PC-9 (cell line): ENCODE measurements at regions of chr20 and their contacts with region 1.

Region 1: GRCh38 chr20:39810309-39810708 is 848.2 kb downstream of the DHX35 start:
- DNase-seq: no peak
- H3K4me3 ChIP-seq: no peak overlapping the region
- H3K27ac ChIP-seq: no peak overlapping the region
- H3K4me1 ChIP-seq: no peaks in the 10 kb centered on the region
- H3K27me3 ChIP-seq: no peaks in the 10 kb centered on the region
- CTCF ChIP-seq: no peak

Region 2: DNA sequence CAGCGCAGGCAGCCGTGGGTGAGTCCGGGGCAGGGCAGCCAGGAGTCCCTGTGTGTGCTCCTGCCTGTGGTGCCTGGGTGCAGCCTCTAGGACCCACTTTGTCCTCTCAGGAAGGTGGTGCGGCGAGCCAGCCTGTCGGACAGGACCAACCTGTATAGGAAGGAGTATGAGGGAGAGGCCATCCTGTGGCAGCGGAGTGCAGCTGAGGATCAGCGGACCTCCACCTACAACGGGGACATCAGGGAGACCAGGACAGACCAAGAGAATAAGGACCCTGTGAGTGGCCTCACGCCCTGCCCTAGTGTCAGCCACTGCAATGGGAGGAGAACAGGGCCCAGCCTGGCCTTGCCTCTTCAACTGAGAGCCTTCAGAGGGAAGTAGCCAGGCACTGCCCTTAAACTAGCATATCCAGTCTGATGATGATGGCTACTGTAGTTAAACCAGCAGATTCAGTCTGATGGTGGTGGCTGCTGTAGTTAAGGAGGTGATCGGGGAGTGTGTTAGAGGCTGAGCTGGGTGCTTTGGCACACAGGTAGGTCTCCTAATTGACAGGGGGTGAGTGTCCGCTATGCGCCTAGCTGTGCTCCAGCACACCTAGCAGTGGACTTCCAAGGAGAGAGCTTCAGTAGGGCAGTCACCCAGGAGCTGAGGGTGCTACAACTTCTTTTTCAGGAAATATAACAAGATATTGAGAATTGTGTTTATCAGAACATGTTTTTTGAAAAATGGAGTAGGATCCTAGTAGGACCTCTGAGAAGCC is 902.2 kb before region 1 on chr20:
- CTCF ChIA-PET with region 1: no interaction called
- POLR2A ChIA-PET with region 1: interaction called, 22 read pairs
- intact Hi-C with region 1: no loop called
- DNase-seq: peak in 1 of 2 experiments; percentile 36
- H3K4me3 ChIP-seq: no peak overlapping the region
- H3K27ac ChIP-seq: no peak overlapping the region
- H3K4me1 ChIP-seq: no peaks in the 10 kb centered on the region
- H3K27me3 ChIP-seq: peaks cover 46% of the 10 kb centered on the region
- CTCF ChIP-seq: no peak